Left cardiac atrium (tissue), 4 donors: ENCODE measurements at regions of chr7 and their contacts with region 1.

Region 1: DNA sequence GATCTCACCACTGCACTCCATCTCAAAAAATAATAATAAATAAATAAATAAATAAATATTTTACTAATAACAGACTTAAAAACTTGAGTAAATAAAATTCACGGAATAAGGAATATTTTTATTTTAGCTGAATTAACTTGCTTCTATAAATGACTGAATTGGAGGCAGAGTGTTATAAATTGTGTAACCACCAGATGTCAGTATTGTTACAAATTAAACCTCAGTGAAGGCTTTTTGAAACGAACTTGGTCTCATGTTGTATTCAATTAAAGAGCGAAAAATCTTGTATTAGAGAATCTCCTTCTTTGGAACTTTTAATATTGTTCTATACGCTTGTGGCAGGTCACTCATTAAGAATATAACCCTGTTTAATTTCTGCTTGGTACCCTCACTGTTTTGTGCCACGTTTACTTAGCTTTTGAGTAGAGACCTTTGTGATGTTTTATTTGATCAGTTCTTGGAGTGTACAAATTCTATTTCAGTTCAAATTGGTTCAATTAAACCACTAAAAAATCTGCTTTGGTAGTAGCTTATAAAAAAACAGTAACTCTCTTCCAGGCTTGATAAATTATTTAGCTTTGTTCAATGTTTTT is 45.6 kb upstream of the SCIN start:
- DNase-seq: no peak
- ATAC-seq: no peak

Region 2: GRCh38 chr7:12090757-12091221 is 434.1 kb before region 1 on chr7:
- intact Hi-C with region 1: no loop called
- DNase-seq: no peak
- ATAC-seq: peak in 1 of 2 donors; percentile 67

Region 3: DNA sequence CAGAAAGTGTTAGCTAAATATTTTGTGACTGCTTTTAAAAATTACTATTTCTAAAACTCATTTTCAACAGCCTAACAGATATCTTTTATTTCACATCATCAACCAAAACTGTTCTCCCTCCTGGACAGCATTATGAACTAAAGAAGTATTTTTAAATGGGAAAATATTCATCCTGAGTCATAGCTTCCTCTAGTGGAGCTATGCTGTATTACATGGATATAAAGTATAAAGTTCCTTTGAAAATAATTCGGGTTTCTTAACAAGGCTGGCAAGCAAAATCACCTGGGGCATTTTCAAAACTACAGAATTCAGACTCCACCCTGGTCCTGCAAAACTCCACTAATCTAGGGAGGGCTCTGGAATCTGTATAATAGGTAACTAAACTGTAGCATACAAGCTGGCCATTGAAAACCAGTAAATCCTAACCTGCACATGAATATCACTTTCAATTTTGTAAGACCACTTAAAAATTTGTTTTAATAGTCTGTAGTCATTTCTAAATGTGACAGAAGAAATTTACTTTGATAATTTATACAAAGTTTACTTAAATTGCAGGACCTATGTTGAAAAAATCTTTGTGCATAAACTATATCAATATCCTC is 99.1 kb after region 1 on chr7:
- intact Hi-C with region 1: loop called in 1 of 2 experiments (anchors 10 kb)
- DNase-seq: no peak
- ATAC-seq: no peak

Region 4: DNA sequence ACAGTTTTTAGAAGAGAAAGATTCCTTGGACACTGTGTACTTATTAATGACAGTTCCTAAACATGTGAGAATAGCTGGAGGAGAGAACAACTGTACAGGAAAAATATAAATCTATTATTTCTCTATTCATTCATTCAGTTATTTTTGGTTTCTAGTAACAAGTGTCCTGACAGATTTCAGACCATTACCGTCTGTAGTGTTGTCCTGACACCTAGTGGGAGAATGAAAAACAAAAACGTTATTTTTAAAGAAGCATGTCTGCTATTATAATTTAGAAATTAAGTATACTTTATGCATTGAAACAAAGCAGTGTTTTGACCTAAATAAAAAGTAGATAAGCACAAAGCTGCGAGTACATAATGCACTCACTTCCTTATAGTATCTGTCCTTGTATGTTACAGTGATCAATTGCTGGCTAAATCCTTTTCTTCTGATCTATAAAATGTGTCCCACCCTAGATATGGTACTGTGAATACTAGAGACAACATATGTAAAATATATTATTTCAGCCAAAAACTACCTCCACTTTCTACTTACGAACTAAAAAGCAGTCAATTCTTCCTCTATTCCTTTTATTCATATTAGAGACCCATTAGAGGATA is 738.1 kb after region 1 on chr7:
- intact Hi-C with region 1: loop called in 1 of 2 experiments (anchors 2 kb)
- DNase-seq: no peak
- ATAC-seq: peak; percentile 47